PC-9 (cell line): ENCODE measurements at regions of chr22 and their contacts with region 1.

Region 1: DNA sequence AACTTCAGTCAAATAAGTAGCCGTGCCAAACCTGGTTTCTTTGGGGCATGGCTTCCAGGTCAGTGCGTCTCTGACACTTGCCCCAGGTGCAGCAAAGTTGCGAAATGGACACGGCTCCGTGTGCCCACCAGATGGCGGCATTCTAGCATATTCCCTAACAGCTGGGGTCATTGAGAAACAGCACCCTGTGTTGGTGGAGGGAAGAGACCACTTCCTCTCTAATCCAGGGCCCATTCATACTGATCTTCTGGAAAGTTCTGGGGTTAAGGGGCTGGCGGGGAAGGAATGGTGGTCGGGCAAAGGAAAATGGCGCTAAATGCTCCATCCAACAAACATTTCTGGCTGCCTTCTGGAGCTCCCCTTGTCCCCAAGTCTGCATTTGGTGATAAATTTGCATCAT is 141.2 kb upstream of the TIMP3 start:
- DNase-seq: peak in 1 of 2 experiments; percentile 55
- H3K4me3 ChIP-seq: no peak overlapping the region
- H3K27ac ChIP-seq: no peak overlapping the region
- H3K4me1 ChIP-seq: peaks cover 1% of the 10 kb centered on the region; the same call in 1 of the 2 replicates
- H3K27me3 ChIP-seq: no peaks in the 10 kb centered on the region
- CTCF ChIP-seq: peak; percentile 75

Region 2: DNA sequence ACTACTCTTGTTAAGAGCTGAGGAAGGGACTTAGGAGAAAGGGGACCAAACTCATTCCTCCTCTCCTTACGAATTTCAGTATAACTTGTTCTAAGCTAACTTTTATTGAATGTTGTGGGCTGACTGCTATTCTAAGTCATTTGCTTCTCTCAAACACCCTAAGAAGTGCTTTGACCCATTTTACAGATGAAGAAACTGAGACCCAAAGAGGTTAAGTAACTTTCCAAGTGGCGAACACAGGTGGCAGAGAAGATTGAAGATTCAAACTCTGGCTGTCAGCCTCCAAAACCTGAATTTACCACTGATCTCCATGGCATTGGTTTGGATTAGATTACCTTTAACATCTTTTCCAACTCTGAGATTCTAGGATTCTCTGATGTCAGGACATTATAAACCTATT is 193.4 kb after region 1 on chr22:
- CTCF ChIA-PET with region 1: interaction called, 10 read pairs
- POLR2A ChIA-PET with region 1: no interaction called
- intact Hi-C with region 1: no loop called
- DNase-seq: no peak
- H3K4me3 ChIP-seq: no peak overlapping the region
- H3K27ac ChIP-seq: no peak overlapping the region
- H3K4me1 ChIP-seq: no peaks in the 10 kb centered on the region
- H3K27me3 ChIP-seq: no peaks in the 10 kb centered on the region
- CTCF ChIP-seq: no peak

Region 3: GRCh38 chr22:32985899-32986765 is 325.8 kb after region 1 on chr22:
- CTCF ChIA-PET with region 1: no interaction called
- POLR2A ChIA-PET with region 1: no interaction called
- intact Hi-C with region 1: loop called (anchors 2 kb)
- DNase-seq: peak; percentile 65 to 74
- H3K4me3 ChIP-seq: no peak overlapping the region
- H3K27ac ChIP-seq: no peak overlapping the region
- H3K4me1 ChIP-seq: peaks cover 27% of the 10 kb centered on the region
- H3K27me3 ChIP-seq: no peaks in the 10 kb centered on the region
- CTCF ChIP-seq: peak; percentile 93